ENCODE measurements at regions of chr11 and their contacts with region 1.

Region 1: DNA sequence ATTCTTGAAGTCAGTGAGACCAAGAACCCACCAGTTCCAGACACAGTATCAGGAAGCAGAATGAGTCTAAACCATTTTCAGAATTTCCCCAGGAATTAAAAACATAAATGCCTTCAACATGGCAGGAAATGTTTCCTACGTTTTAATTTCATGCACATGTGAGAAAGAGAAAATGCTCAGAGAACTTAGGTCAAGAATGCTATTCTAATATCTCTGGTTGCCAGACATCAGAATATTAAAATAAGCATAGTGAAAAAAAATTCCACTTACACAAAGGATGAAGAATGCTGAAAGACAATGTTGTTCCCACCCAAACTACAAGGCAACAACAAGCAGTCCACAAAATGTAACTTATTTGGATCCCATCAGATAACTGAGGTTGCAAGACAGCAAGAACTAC is 104.8 kb downstream of the RAB38 start:
- DNase-seq: no peak

Region 2: GRCh38 chr11:87645626-87646025 is 424.8 kb before region 1 on chr11:
- intact Hi-C with region 1: loop called in 1 of 2 experiments (anchors 5 kb)
- DNase-seq: no peak

Region 3: DNA sequence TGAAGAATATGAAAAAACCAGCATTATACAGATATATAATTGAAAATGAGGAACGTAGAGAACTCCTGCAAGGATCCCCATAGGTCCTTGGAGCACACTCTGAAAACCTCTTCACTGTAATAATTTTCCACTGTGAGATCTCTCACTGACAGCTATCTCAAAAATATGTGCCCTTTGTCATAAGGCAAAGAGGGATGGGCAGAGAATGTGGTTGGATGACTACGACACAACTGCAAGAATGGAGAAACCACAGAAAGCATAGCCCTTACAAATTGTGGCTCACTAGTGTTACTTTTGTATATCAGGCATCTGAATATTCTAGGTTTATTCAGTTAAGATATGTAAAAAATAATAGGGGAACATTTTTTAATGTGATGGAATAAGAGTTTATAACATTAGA is 275.0 kb after region 1 on chr11:
- intact Hi-C with region 1: no loop called
- DNase-seq: no peak